Ascending aorta (tissue), 2 donors: ENCODE measurements at regions of chr6 and their contacts with region 1.

Region 1: DNA sequence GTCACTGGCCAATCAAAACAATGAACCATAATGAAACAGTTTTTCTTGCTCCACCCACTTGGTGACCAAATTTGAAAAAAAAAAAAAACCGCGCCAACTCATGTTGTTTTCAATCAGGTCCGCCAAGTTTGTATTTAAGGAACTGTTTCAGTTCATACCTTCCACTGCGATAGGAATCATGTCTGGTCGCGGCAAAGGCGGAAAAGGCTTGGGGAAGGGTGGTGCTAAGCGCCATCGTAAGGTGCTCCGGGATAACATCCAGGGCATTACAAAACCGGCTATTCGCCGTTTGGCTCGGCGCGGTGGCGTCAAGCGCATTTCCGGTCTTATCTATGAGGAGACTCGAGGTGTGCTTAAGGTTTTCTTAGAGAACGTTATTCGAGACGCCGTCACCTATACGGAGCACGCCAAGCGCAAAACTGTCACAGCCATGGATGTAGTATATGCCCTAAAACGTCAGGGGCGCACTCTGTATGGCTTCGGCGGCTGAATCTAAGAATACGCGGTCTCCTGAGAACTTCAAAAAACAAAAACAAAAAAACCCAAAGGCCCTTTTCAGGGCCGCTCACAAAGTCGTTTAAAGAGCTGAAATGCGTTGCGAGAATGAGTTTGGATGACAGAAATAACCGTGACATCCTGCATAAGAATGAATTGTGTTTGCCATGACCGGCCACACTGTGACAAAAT is 16.7 kb downstream of the HFE start:
- DNase-seq: peak; percentile 68 to 94
- H3K4me3 ChIP-seq: peak overlapping the region; percentile 67 to 79
- H3K27ac ChIP-seq: peak overlapping the region; percentile 93 to 95
- H3K4me1 ChIP-seq: peaks cover 0 to 13% of the 10 kb centered on the region in 2 donors
- H3K27me3 ChIP-seq: no peaks in the 10 kb centered on the region
- CTCF ChIP-seq: peak; percentile 13 to 53 (median 51)

Region 2: DNA sequence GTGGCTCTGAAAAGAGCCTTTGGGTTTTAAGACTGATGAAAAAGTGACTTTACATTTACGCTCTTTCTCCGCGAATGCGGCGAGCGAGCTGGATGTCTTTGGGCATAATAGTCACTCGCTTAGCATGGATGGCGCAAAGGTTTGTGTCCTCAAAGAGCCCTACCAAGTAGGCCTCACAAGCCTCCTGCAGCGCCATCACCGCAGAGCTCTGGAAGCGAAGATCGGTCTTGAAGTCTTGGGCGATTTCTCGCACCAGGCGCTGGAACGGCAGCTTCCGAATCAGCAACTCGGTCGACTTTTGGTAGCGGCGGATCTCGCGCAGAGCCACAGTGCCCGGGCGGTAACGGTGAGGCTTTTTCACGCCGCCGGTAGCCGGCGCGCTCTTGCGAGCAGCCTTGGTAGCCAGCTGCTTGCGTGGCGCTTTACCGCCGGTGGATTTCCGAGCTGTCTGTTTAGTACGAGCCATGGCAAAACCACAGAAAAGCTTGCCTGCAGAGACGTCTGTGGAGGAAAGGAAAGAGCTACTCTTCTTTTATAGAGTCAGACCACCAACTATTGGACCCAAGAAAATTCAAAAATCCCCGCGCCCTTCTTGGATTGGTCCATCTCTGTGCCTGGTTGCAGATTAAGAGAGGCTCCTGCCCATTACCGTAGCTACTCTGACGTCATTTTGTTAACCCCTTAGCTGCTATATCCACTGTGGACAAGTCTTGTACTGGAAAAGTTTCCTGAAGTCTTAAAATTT is 72.1 kb before region 1 on chr6:
- intact Hi-C with region 1: loop called (anchors 1 kb)
- DNase-seq: peak; percentile 53 to 94
- H3K4me3 ChIP-seq: peak overlapping the region; percentile 56 to 79
- H3K27ac ChIP-seq: peak overlapping the region; percentile 92 to 96
- H3K4me1 ChIP-seq: peaks cover 5 to 20% of the 10 kb centered on the region in 2 donors
- H3K27me3 ChIP-seq: no peaks in the 10 kb centered on the region
- CTCF ChIP-seq: peak in 1 of 3 experiments; percentile 20

Region 3: DNA sequence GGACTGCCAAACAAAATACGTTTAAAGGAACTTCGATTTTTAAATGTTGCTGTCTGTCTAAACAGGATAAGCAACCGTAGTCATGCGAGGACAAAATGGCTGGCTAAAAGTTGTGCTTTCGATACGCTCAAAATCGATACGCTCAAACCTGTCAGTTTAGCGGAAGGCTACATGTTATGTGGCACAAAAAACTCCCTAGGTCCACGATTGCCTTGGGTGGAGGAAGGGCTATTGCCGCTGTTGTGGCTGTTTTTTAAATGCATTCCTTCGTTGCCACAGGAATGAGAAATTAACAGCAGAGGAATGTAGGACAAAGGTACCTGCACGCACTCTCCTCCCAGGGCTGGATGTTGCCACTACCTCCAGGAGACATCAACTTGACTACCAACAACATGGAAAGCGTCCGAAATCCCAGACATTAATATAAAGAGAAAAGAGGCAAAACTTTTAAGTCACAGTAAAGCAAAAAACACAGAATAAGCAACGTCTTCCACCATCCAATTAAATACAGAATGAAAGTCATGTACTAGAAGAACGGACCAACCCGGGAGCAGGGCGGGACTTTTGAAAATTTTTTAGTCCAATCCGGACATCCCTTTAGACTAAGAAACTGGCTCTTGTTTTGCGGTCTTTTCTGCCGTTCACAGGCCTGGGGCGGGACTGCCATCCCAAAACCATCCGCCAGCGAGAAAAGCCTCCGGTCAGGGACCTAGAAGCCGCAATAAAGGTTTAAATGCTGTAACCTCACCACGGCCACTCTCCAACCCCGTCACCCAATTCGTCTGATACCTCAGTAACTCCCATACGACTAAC is 48.9 kb before region 1 on chr6:
- intact Hi-C with region 1: loop called (anchors 2 kb)
- DNase-seq: peak; percentile 68 to 96
- H3K4me3 ChIP-seq: peak overlapping the region; percentile 74 to 80
- H3K27ac ChIP-seq: peak overlapping the region; percentile 92 to 94
- H3K4me1 ChIP-seq: peaks cover 0 to 7% of the 10 kb centered on the region in 2 donors
- H3K27me3 ChIP-seq: no peaks in the 10 kb centered on the region
- CTCF ChIP-seq: peak in 2 of 3 experiments; percentile 23 to 36

Region 4: GRCh38 chr6:26156076-26156849 is 52.4 kb after region 1 on chr6:
- intact Hi-C with region 1: loop called (anchors 1 kb)
- DNase-seq: peak; percentile 67 to 95
- H3K4me3 ChIP-seq: peak overlapping the region; percentile 86 to 91
- H3K27ac ChIP-seq: peak overlapping the region; percentile 98 to 99
- H3K4me1 ChIP-seq: peaks cover 0 to 14% of the 10 kb centered on the region in 2 donors
- H3K27me3 ChIP-seq: no peaks in the 10 kb centered on the region
- CTCF ChIP-seq: peak in 1 of 3 experiments; percentile 24

Region 5: GRCh38 chr6:26196846-26197648 is 93.1 kb after region 1 on chr6:
- intact Hi-C with region 1: loop called (anchors 5 kb)
- DNase-seq: peak; percentile 64 to 91
- H3K4me3 ChIP-seq: peak overlapping the region; percentile 62 to 86
- H3K27ac ChIP-seq: peak overlapping the region; percentile 92 to 95
- H3K4me1 ChIP-seq: peaks cover 4 to 13% of the 10 kb centered on the region in 2 donors
- H3K27me3 ChIP-seq: no peaks in the 10 kb centered on the region
- CTCF ChIP-seq: no peak

Region 6: GRCh38 chr6:27809939-27810767 is 1706.2 kb after region 1 on chr6:
- intact Hi-C with region 1: loop called (anchors 10 kb)
- DNase-seq: peak in 1 of 2 donors; percentile 86
- H3K4me3 ChIP-seq: peak overlapping the region; percentile 65 to 87
- H3K27ac ChIP-seq: peak overlapping the region; percentile 82 to 92
- H3K4me1 ChIP-seq: peaks cover 5 to 6% of the 10 kb centered on the region in 2 donors
- H3K27me3 ChIP-seq: no peaks in the 10 kb centered on the region
- CTCF ChIP-seq: peak in 1 of 3 experiments; percentile 13